Activated CD4-positive, alpha-beta memory T cell treated with anti-CD3 and anti-CD28 coated beads for 36 hours (primary cell): ENCODE measurements at regions of chr10 and their contacts with region 1.

Region 1: DNA sequence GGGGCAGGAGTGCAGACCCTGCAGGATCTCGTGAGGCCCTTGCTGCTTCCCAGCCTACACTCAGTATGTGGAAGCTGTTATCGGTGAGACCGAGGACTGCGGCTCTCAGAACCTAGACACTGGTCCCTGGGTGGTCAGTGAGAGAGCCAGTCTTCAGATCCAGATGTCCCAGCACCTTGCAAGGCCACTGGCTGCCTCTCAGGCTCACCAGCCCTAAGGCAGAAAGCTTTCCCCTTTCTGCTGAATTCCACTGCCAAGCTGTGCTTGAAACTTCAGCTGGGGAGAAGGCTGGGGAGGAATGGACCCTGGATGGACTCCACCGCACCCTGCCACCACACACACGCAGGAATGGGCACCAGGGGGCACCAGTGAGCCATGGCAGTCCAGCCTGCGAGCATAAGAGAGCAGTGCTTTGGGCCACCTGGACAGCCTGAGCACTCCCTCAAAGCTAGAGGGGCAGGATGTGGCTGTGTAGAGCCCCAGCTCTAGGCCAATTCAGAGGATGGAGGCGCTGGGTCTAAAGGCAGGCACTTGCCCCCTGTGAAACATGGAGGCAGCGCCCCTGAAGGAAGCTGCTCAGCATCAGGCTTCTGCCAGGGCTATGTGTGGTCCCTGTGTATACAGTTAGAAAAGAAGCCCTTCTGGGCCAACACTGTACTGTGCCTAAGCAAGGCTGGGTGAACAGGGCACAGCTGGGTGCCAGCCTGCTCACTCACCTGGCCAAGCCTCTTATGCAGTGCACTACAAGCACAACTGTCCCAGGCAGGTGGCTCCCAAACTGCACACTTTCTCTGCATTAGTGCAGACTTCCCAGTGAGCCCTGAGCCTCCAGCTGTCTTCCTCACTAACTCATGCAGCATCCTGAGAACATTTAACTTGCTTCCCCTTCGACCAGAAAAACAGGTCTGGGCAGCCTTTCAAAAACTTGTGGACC is 21.6 kb downstream of the TMEM72 start:
- DNase-seq: peak; percentile 86
- H3K4me3 Mint-ChIP-seq: no peak overlapping the region
- H3K27ac Mint-ChIP-seq: no peak overlapping the region
- H3K4me1 Mint-ChIP-seq: peaks cover 5% of the 10 kb centered on the region
- H3K27me3 Mint-ChIP-seq: no peaks in the 10 kb centered on the region

Region 2: DNA sequence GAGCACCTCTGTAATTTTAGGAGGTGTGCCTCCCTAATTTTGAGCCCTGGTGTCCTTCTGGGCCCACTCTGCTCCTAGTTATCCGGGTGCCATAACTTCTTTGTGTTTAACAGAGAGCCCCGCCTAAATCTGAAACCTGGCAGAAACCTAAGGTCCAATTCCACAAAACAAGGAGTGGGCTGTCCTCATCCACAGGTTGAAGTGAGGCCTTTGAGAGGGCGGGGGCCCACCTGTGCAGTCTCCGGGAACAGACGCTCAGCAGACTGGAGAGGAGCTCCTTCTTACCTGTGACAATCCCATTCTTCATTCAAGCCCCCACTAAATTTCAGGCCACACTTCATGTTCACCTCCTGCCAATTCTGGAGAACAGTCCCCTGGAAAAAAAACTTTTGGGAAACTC is 10.8 kb before region 1 on chr10:
- CTCF ChIA-PET with region 1: interaction called, 13 read pairs
- POLR2A ChIA-PET with region 1: no interaction called
- intact Hi-C with region 1: no loop called
- DNase-seq: no peak
- H3K4me3 Mint-ChIP-seq: no peak overlapping the region
- H3K27ac Mint-ChIP-seq: no peak overlapping the region
- H3K4me1 Mint-ChIP-seq: no peaks in the 10 kb centered on the region
- H3K27me3 Mint-ChIP-seq: no peaks in the 10 kb centered on the region

Region 3: GRCh38 chr10:44947371-44948152 is 14.8 kb after region 1 on chr10:
- CTCF ChIA-PET with region 1: interaction called, 12 read pairs
- POLR2A ChIA-PET with region 1: no interaction called
- intact Hi-C with region 1: no loop called
- DNase-seq: no peak
- H3K4me3 Mint-ChIP-seq: no peak overlapping the region
- H3K27ac Mint-ChIP-seq: no peak overlapping the region
- H3K4me1 Mint-ChIP-seq: no peaks in the 10 kb centered on the region
- H3K27me3 Mint-ChIP-seq: peaks cover 9% of the 10 kb centered on the region

Region 4: DNA sequence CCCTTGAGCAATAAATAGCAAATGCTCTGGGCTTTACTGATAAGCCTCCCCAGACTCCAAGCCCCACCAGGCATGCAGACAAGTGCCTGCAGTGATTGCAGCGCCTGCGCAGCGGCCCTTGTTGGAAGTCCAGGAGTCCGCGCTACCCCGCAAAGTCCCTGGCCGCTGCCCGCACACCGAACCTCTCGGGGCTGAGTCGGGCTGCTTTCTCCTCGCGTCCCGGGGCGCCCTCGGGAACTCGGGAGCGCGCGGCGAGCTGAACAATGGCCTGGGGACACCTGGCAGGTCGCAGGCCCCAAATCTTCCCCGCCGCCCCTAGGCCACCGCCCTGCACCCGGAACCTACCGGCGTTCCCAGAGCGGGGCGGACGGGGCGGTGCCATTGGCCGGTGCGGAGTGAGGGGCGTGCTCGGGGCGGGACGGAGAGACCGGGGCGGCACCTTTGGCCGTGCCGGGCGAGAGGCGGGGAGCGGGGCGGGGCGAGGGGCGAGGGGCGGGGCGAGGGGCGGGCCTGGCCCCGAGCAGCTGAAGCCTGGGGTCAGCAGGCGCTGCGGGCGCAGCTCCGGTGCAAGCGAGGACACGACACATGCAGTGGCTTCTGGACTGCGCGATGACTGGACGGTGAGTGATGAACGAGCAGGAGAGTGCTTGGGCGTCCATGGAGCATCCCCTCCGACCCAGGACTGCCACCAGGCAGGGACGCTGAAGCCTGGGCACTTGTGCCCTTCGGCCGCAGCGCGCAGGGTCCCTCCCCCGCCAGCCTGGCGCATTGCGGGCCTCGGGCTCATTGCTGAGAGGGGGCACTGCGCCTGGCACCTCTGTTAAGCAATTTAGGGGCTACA is 26.7 kb after region 1 on chr10 and contains the start of gene RASSF4:
- CTCF ChIA-PET with region 1: interaction called, 13 read pairs
- POLR2A ChIA-PET with region 1: no interaction called
- intact Hi-C with region 1: no loop called
- DNase-seq: peak; percentile 94
- H3K4me3 Mint-ChIP-seq: peak within 1 kb of the TSS; percentile 82
- H3K27ac Mint-ChIP-seq: peak within 1 kb of the TSS; percentile 42
- H3K4me1 Mint-ChIP-seq: peaks cover 14% of the 10 kb centered on the region
- H3K27me3 Mint-ChIP-seq: no peaks in the 10 kb centered on the region
- total RNA-seq, gene RASSF4: 0.77 to 1.1 TPM

Region 5: GRCh38 chr10:44968091-44968490 is 35.3 kb after region 1 on chr10:
- CTCF ChIA-PET with region 1: interaction called, 28 read pairs
- POLR2A ChIA-PET with region 1: no interaction called
- intact Hi-C with region 1: no loop called
- DNase-seq: no peak
- H3K4me3 Mint-ChIP-seq: no peak overlapping the region
- H3K27ac Mint-ChIP-seq: no peak overlapping the region
- H3K4me1 Mint-ChIP-seq: peaks cover 25% of the 10 kb centered on the region
- H3K27me3 Mint-ChIP-seq: no peaks in the 10 kb centered on the region

Region 6: DNA sequence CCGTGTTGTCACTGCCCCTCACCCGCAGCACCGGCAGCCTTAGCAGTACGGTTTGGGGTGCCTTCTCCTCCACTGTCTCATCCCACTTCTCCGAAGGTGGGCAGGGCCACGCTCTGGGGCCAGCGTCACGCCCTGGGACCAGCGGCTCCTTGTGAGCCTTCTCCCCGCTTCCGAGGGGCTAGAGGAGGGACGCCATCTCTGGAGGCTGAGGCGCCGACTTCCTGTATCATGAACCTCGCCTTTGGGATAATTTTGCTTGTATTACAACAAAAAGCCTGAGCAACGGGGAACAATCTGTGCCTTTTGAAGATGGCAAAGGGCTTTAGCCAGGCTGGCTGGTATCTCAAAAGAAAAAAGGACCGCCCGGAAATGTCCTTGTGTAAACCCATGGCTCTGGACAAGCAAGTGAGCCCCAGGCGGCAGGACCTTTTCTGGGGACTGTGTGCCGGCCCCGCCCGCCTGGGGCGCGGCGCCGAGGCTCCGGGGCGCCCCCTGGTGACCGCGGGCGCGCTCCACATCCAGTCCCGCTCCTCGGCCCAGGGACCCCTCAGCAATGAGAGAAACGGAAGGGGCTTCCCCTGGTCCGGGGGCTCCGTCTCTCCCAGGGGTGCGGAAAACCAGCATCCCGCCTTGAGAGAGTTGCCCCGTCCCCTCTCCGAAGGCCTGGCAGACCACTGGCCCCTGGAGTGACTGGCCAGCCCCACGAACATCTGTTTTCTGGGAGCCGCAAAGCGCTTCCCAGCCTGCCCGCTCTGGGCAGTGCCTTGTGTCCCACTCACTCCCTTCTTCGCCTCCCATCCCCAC is 42.0 kb after region 1 on chr10:
- CTCF ChIA-PET with region 1: interaction called, 28 read pairs
- POLR2A ChIA-PET with region 1: interaction called, 3 read pairs
- intact Hi-C with region 1: loop called (anchors 1 kb)
- DNase-seq: peak; percentile 74
- H3K4me3 Mint-ChIP-seq: peak overlapping the region; percentile 68
- H3K27ac Mint-ChIP-seq: no peak overlapping the region
- H3K4me1 Mint-ChIP-seq: peaks cover 2% of the 10 kb centered on the region
- H3K27me3 Mint-ChIP-seq: no peaks in the 10 kb centered on the region

Region 7: DNA sequence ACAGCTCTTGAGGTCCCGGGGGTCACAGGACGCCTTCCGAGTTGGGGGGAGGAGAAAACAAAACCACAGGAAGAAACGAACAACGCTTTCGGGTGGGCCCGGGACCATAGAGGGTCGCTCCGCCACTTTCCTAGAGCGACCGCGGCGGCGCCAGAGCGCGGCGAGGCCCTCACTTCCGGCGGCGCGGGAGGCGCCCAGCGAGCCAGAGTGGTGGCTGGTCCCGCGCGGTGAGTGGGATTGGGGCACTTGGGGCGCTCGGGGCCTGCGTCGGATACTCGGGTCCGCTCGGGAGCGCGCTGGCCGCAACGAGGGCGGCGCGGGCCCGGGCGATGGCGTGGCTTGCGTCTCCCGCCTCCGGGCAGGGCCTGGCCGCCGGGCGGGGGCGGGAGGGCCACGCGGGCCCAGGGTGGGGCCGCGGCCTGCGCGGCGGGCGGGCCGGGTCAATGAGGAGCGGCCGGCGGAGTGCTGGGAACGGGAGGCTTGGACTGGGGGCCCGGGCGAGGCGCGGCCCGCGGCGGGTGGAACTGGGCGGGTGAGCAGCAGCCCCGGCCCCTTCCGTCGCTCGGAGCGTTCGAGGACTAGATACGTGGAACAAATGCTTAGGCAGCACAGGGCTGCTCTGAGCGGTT is 68.1 kb after region 1 on chr10 and contains the start of gene ZNF22:
- CTCF ChIA-PET with region 1: interaction called, 5 read pairs
- POLR2A ChIA-PET with region 1: no interaction called
- intact Hi-C with region 1: loop called (anchors 2 kb)
- DNase-seq: peak; percentile 69
- H3K4me3 Mint-ChIP-seq: peak within 1 kb of the TSS; percentile 87
- H3K27ac Mint-ChIP-seq: peak within 1 kb of the TSS; percentile 85
- H3K4me1 Mint-ChIP-seq: peaks cover 32% of the 10 kb centered on the region
- H3K27me3 Mint-ChIP-seq: no peaks in the 10 kb centered on the region
- total RNA-seq, gene ZNF22: 19.3 to 19.9 TPM

Region 8: DNA sequence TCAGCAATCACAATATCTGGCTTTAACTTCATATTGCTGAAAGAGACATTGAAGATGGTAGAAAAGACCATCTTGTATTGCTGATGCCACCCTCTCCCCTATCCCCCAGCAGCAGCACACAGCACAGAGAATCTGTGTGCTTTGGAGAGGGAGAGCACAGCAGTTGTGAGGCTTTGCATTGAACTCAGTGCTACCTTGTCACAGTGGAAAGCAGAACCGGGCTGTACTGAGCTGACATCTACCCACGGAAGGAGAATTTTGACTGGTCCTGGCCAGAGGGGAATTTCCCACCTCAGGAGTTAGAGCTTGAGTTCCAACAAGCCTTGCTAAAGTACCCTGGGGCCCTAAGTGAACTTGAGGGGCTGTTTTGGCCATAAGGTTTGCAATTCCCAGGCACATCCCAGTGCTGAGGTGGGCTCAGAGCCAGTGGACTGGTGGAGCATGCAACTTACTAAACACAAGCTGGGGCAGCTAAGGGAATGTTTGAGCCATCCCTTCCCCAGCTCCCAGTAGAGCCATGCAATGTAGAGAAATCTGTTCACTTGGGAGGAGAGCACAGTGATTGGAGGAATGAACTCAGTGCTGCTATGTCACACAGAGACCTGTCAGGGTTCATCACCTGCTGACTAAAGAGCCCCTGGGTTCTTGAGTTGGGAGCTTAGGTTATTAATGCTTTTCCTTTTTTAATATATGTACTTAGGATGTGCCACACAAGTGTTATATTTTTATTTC is 320.6 kb after region 1 on chr10:
- CTCF ChIA-PET with region 1: no interaction called
- POLR2A ChIA-PET with region 1: no interaction called
- intact Hi-C with region 1: no loop called
- DNase-seq: peak; percentile 40
- H3K4me3 Mint-ChIP-seq: no peak overlapping the region
- H3K27ac Mint-ChIP-seq: no peak overlapping the region
- H3K4me1 Mint-ChIP-seq: peaks cover 11% of the 10 kb centered on the region
- H3K27me3 Mint-ChIP-seq: peaks cover 2% of the 10 kb centered on the region

Region 9: DNA sequence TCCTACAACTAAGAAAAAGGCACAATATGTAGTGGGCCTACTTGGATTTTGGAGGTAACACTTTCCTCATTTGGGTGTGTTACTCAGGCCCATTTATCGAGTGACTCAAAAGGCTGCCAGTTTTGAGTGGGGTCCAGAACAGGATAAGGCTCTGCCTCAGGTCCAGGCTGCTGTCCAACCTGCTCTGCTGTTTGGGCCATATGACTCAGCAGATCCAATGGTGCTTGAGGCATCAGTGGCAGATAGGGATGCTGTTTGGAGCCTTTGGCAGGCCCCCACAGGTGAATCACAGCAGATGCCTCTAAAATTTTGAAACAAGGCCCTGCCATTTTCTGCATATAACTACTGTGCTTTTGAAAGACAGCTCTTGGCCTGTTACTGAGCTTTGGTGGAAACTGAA is 407.1 kb after region 1 on chr10:
- CTCF ChIA-PET with region 1: no interaction called
- POLR2A ChIA-PET with region 1: no interaction called
- intact Hi-C with region 1: no loop called
- DNase-seq: no peak
- H3K4me3 Mint-ChIP-seq: no peak overlapping the region
- H3K27ac Mint-ChIP-seq: no peak overlapping the region
- H3K4me1 Mint-ChIP-seq: no peaks in the 10 kb centered on the region
- H3K27me3 Mint-ChIP-seq: peaks cover 5% of the 10 kb centered on the region